Left colon (tissue), 2 donors: ENCODE measurements at regions of chr11 and their contacts with region 1.

Region 1: DNA sequence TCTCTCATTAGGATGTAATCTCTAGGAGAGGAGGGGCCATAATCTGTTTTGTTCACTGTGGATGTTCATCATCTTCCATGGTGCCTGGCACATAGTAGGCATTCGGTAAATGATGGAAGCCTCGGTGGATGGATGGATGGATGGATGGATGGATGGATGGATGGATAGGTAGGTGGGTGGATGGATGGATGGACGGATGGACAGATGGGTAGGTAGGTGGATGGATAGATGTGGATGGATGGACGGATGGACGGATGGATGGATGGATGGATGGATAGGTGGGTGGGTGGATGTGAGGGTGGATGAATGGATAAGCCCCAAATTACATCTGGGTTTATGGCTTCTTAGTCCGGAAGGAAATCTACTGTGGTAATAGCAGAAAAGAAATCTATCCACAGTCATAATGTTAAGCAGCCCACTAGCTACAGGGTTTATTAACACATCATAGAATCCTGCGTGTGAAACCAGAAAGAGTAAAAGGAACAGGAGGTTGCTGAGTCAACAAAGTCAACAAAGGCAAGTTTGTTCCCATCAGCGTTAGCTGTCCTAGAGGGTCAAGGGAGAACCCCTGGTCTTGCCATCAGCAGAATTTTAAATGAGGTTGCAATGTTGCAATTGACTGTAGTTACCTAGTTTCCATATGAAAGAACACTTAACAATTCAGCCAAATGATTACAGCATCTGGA is 82.8 kb downstream of the C11orf91 start:
- DNase-seq: no peak
- ATAC-seq: no peak

Region 2: GRCh38 chr11:33588084-33588483 is 29.7 kb before region 1 on chr11:
- intact Hi-C with region 1: no loop called
- DNase-seq: no peak
- ATAC-seq: no peak

Region 3: GRCh38 chr11:33670250-33671011 is 52.6 kb after region 1 on chr11:
- intact Hi-C with region 1: loop called in 1 of 2 experiments (anchors 10 kb)
- DNase-seq: no peak
- ATAC-seq: no peak